IMR-90 (cell line): ENCODE measurements at regions of chr3 and their contacts with region 1.

Region 1: GRCh38 chr3:197050511-197050910 is 20.9 kb upstream of the MELTF start:
- DNase-seq: no peak
- ATAC-seq: no peak
- H3K4me3 ChIP-seq: no peak overlapping the region
- H3K27ac ChIP-seq: no peak overlapping the region
- H3K4me1 ChIP-seq: no peaks in the 10 kb centered on the region
- H3K27me3 ChIP-seq: no peaks in the 10 kb centered on the region
- CTCF ChIP-seq: no peak
- POLR2A ChIP-seq: no peak
- RAD21 ChIP-seq: no peak

Region 2: GRCh38 chr3:197083486-197083885 is 33.0 kb after region 1 on chr3:
- CTCF ChIA-PET with region 1: no interaction called
- POLR2A ChIA-PET with region 1: no interaction called
- dilution Hi-C with region 1: no loop called
- in situ Hi-C with region 1: no loop called
- intact Hi-C with region 1: loop called (anchors 5 kb)
- DNase-seq: peak; percentile 88
- ATAC-seq: peak; percentile 98
- H3K4me3 ChIP-seq: no peak overlapping the region
- H3K27ac ChIP-seq: no peak overlapping the region
- H3K4me1 ChIP-seq: peaks cover 5% of the 10 kb centered on the region
- H3K27me3 ChIP-seq: no peaks in the 10 kb centered on the region
- CTCF ChIP-seq: no peak
- POLR2A ChIP-seq: no peak
- RAD21 ChIP-seq: no peak